ENCODE measurements at regions of chr2 and their contacts with region 1.

Region 1: GRCh38 chr2:100984892-100985379 is 17.2 kb upstream of the RPL31 start:
- DNase-seq: peak; percentile 46 to 86 (median 80)
- ATAC-seq: peak; percentile 86
- H3K4me3 ChIP-seq: no peak overlapping the region
- H3K4me3 Mint-ChIP-seq: no peak overlapping the region
- H3K27ac ChIP-seq: no peak overlapping the region
- H3K27ac Mint-ChIP-seq: no peak overlapping the region
- H3K4me1 ChIP-seq: no peaks in the 10 kb centered on the region
- H3K4me1 Mint-ChIP-seq: no peaks in the 10 kb centered on the region
- H3K27me3 ChIP-seq: no peaks in the 10 kb centered on the region
- H3K27me3 Mint-ChIP-seq: no peaks in the 10 kb centered on the region
- CTCF ChIP-seq: peak; percentile 84

Region 2: GRCh38 chr2:99559075-99559662 is 1425.8 kb before region 1 on chr2:
- CTCF ChIA-PET with region 1: no interaction called
- POLR2A ChIA-PET with region 1: no interaction called
- intact Hi-C with region 1: loop called in 1 of 2 experiments (anchors 10 kb)
- DNase-seq: peak; percentile 65 to 91 (median 81)
- ATAC-seq: peak; percentile 95
- H3K4me3 ChIP-seq: no peak overlapping the region
- H3K4me3 Mint-ChIP-seq: no peak overlapping the region
- H3K27ac ChIP-seq: no peak overlapping the region
- H3K27ac Mint-ChIP-seq: no peak overlapping the region
- H3K4me1 ChIP-seq: no peaks in the 10 kb centered on the region
- H3K4me1 Mint-ChIP-seq: peaks cover 2% of the 10 kb centered on the region
- H3K27me3 ChIP-seq: no peaks in the 10 kb centered on the region
- H3K27me3 Mint-ChIP-seq: no peaks in the 10 kb centered on the region
- CTCF ChIP-seq: peak; percentile 98

Region 3: GRCh38 chr2:100262555-100263320 is 722.2 kb before region 1 on chr2:
- CTCF ChIA-PET with region 1: no interaction called
- POLR2A ChIA-PET with region 1: no interaction called
- intact Hi-C with region 1: loop called in 1 of 2 experiments (anchors 2 kb)
- DNase-seq: peak; percentile 16 to 73 (median 54)
- ATAC-seq: peak; percentile 70
- H3K4me3 ChIP-seq: no peak overlapping the region
- H3K4me3 Mint-ChIP-seq: no peak overlapping the region
- H3K27ac ChIP-seq: no peak overlapping the region
- H3K27ac Mint-ChIP-seq: no peak overlapping the region
- H3K4me1 ChIP-seq: no peaks in the 10 kb centered on the region
- H3K4me1 Mint-ChIP-seq: peaks cover 2% of the 10 kb centered on the region
- H3K27me3 ChIP-seq: no peaks in the 10 kb centered on the region
- H3K27me3 Mint-ChIP-seq: no peaks in the 10 kb centered on the region
- CTCF ChIP-seq: peak; percentile 91

Region 4: DNA sequence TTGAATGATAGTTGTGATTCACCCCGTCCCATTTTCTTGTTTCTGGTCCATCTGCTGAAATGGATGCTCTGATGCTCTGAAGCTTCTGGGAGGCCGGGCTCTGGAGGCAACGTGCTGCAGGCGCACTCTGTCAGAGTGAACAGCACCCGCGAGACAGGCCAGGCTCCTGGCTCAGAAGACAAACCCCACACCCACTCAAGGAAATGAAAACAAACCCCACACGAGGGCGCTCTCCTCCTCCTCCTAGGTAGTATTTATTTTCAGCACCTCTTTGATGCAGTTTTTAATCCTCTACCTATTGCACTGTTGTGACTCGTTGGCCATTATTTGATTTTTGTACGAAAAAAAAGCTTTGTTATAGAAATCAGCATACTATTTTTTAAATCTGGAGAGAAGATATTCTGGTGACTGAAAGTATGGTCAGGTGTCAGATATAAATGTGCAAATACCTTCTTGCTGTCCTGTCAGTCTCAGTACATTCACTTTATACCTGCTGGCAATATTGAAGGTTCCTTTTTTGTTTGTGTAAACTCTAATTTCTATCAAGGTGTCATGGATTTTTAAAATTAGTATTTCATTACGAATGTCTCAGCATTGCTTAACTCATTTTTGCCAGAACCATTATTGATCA is 557.2 kb before region 1 on chr2:
- CTCF ChIA-PET with region 1: no interaction called
- POLR2A ChIA-PET with region 1: no interaction called
- intact Hi-C with region 1: loop called (anchors 2 to 10 kb)
- DNase-seq: peak; percentile 39 to 77 (median 70)
- ATAC-seq: peak; percentile 83
- H3K4me3 ChIP-seq: no peak overlapping the region
- H3K4me3 Mint-ChIP-seq: no peak overlapping the region
- H3K27ac ChIP-seq: no peak overlapping the region
- H3K27ac Mint-ChIP-seq: no peak overlapping the region
- H3K4me1 ChIP-seq: no peaks in the 10 kb centered on the region
- H3K4me1 Mint-ChIP-seq: peaks cover 4% of the 10 kb centered on the region
- H3K27me3 ChIP-seq: no peaks in the 10 kb centered on the region
- H3K27me3 Mint-ChIP-seq: peaks cover 15% of the 10 kb centered on the region
- CTCF ChIP-seq: peak; percentile 61

Region 5: DNA sequence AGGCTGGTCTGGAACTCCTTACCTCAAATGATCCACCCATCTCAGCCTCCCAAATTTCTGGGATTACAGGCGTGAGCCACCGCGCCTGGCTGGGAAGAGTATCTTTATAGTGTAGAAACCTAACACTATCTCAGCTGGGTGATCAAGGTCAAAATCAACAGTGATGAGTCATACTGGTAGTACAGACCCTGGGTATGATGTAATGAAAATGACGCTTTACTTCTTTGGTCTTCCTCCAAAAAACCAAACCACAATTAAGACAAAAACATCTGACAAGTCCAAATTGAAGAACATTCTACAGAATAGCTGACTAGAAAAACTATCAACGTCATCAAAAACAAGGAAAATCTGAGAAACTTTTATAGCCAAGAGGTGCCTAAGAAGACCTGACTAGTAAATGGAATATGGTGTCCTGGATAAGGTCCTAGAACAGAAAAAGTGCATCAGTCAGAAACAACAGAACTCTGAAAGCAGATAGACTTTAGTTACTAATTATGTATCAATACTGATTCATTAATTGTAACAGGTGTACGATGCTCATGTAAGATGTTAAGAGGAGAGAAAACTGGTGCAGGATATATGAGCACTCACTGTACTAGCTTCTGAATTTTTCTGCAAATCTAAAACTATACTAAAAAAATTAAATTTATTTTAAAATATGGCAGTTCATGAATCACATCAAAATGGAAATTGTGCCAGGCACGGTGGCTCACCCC is 396.7 kb before region 1 on chr2:
- CTCF ChIA-PET with region 1: interaction called, 29 read pairs
- POLR2A ChIA-PET with region 1: no interaction called
- intact Hi-C with region 1: no loop called
- DNase-seq: peak in 5 of 9 experiments; percentile 18 to 89 (median 34)
- ATAC-seq: peak; percentile 88
- H3K4me3 ChIP-seq: no peak overlapping the region
- H3K4me3 Mint-ChIP-seq: no peak overlapping the region
- H3K27ac ChIP-seq: no peak overlapping the region
- H3K27ac Mint-ChIP-seq: peak overlapping the region; percentile 78
- H3K4me1 ChIP-seq: peaks cover 10% of the 10 kb centered on the region
- H3K4me1 Mint-ChIP-seq: peaks cover 20% of the 10 kb centered on the region
- H3K27me3 ChIP-seq: no peaks in the 10 kb centered on the region
- H3K27me3 Mint-ChIP-seq: no peaks in the 10 kb centered on the region
- CTCF ChIP-seq: no peak

Region 6: DNA sequence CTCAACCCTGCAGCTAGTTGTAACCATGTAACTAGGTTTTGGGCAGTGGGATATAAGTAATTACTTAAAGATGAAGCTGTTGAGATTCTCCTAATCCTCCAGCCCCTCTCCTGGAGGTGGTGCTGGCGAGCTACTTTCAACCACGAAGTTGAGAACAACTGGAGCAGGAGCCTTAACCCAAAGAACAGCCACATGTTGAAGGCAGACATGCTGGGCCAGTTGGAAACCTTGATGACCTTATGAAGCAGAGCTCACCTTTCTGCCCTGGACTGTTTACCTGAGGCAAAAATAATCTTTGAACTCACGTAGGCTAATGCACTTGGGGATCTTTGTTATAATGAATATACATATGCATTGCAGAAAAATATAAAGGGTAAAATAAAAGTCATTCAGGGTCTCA is 254.6 kb before region 1 on chr2:
- CTCF ChIA-PET with region 1: interaction called, 12 read pairs
- POLR2A ChIA-PET with region 1: no interaction called
- intact Hi-C with region 1: loop called in 1 of 2 experiments (anchors 1 kb)
- DNase-seq: peak in 6 of 9 experiments; percentile 18 to 57 (median 44)
- ATAC-seq: peak; percentile 55
- H3K4me3 ChIP-seq: no peak overlapping the region
- H3K4me3 Mint-ChIP-seq: no peak overlapping the region
- H3K27ac ChIP-seq: no peak overlapping the region
- H3K27ac Mint-ChIP-seq: no peak overlapping the region
- H3K4me1 ChIP-seq: no peaks in the 10 kb centered on the region
- H3K4me1 Mint-ChIP-seq: peaks cover 2% of the 10 kb centered on the region
- H3K27me3 ChIP-seq: peaks cover 0 to 4% of the 10 kb centered on the region in 2 experiments
- H3K27me3 Mint-ChIP-seq: peaks cover 10% of the 10 kb centered on the region
- CTCF ChIP-seq: peak; percentile 35

Region 7: GRCh38 chr2:101030863-101031554 is 46.1 kb after region 1 on chr2:
- CTCF ChIA-PET with region 1: no interaction called
- POLR2A ChIA-PET with region 1: no interaction called
- intact Hi-C with region 1: no loop called
- DNase-seq: no peak
- ATAC-seq: no peak
- H3K4me3 ChIP-seq: no peak overlapping the region
- H3K4me3 Mint-ChIP-seq: no peak overlapping the region
- H3K27ac ChIP-seq: no peak overlapping the region
- H3K27ac Mint-ChIP-seq: no peak overlapping the region
- H3K4me1 ChIP-seq: no peaks in the 10 kb centered on the region
- H3K4me1 Mint-ChIP-seq: no peaks in the 10 kb centered on the region
- H3K27me3 ChIP-seq: no peaks in the 10 kb centered on the region
- H3K27me3 Mint-ChIP-seq: peaks cover 4% of the 10 kb centered on the region
- CTCF ChIP-seq: no peak

Region 8: DNA sequence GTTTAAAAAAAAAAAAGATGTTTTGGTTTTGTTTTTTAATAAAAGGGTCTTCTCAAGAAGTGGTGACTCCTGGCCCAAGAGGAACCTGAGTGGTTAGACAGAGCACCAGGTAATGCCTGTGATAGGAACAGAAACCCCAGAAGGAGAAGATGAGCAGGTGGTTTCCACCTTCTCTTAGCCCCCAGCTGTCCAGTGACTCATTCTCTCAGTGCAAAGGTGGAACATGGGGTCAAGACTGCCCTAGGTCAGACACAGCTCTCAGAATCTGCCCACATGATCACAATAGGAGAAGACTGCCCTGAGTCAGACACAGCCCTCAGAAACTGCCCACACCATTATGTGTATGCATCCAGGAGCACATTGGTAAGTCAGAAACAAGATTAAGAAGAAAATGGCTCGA is 104.5 kb after region 1 on chr2:
- CTCF ChIA-PET with region 1: no interaction called
- POLR2A ChIA-PET with region 1: no interaction called
- intact Hi-C with region 1: no loop called
- DNase-seq: no peak
- ATAC-seq: no peak
- H3K4me3 ChIP-seq: no peak overlapping the region
- H3K4me3 Mint-ChIP-seq: no peak overlapping the region
- H3K27ac ChIP-seq: no peak overlapping the region
- H3K27ac Mint-ChIP-seq: no peak overlapping the region
- H3K4me1 ChIP-seq: no peaks in the 10 kb centered on the region
- H3K4me1 Mint-ChIP-seq: no peaks in the 10 kb centered on the region
- H3K27me3 ChIP-seq: no peaks in the 10 kb centered on the region
- H3K27me3 Mint-ChIP-seq: peaks cover 10% of the 10 kb centered on the region
- CTCF ChIP-seq: no peak